ENCODE measurements at regions of chr2 and their contacts with region 1.

Region 1: GRCh38 chr2:138827426-138828054 is 47.4 kb upstream of the NXPH2 start:
- DNase-seq: peak; percentile 14
- ATAC-seq: peak; percentile 57
- H3K4me3 Mint-ChIP-seq: no peak overlapping the region
- H3K27ac Mint-ChIP-seq: no peak overlapping the region
- H3K4me1 Mint-ChIP-seq: no peaks in the 10 kb centered on the region
- H3K27me3 Mint-ChIP-seq: peaks cover 4% of the 10 kb centered on the region

Region 2: DNA sequence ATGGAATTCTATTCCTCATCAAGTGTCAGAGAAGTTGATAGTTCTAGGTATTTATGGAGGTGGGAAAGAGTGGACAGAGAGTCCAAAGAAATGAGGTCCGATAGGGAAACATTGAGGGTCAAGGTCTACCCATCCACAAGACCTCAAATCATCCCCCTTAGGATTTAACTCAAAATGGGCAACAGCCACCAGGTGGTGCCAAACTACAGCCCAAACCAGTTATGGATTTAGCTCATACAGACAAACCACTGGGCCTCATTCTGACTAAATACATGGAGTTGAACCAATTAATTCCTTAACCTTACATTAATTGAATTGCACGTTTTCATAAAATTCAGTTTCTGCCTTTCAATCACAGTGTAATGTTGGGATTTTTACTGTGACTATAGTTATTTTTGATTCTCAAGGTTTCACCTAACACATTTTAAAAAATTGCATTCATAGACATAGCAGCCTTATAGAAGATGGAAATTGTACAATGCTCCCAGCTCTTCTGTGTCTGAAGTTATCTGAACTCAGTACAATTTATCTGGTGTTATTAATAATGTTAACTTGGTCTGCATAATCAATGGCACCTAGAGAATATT is 961.5 kb before region 1 on chr2:
- CTCF ChIA-PET with region 1: interaction called, 16 read pairs
- POLR2A ChIA-PET with region 1: interaction called, 5 read pairs
- intact Hi-C with region 1: loop called (anchors 1 kb)
- DNase-seq: peak; percentile 72
- ATAC-seq: peak; percentile 42
- H3K4me3 Mint-ChIP-seq: no peak overlapping the region
- H3K27ac Mint-ChIP-seq: no peak overlapping the region
- H3K4me1 Mint-ChIP-seq: no peaks in the 10 kb centered on the region
- H3K27me3 Mint-ChIP-seq: peaks cover 4% of the 10 kb centered on the region

Region 3: DNA sequence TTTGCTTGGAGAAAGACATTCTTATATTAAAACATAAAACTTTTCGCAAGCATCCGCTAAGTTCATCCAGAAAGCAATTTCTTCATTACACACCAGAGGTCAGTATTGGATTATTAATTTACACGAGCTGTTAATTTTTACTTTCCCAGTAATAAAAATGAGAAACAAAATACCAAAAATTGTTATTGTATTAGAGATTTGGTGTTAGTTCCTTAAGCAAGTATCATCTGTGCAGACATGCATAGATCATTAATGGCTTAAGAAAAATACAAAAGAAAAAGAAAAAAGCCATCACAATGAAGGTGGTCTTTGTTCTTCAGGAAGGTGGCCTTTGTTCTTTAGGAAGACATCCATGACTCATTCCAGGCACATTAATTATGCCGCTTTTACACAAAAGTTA is 916.9 kb before region 1 on chr2:
- CTCF ChIA-PET with region 1: interaction called, 13 read pairs
- POLR2A ChIA-PET with region 1: no interaction called
- intact Hi-C with region 1: loop called (anchors 1 to 2 kb)
- DNase-seq: no peak
- ATAC-seq: no peak
- H3K4me3 Mint-ChIP-seq: no peak overlapping the region
- H3K27ac Mint-ChIP-seq: no peak overlapping the region
- H3K4me1 Mint-ChIP-seq: no peaks in the 10 kb centered on the region
- H3K27me3 Mint-ChIP-seq: peaks cover 2% of the 10 kb centered on the region

Region 4: GRCh38 chr2:137947728-137948336 is 879.7 kb before region 1 on chr2:
- CTCF ChIA-PET with region 1: interaction called, 4 read pairs
- POLR2A ChIA-PET with region 1: no interaction called
- intact Hi-C with region 1: loop called in 1 of 2 experiments (anchors 1 kb)
- DNase-seq: peak; percentile 61
- ATAC-seq: no peak
- H3K4me3 Mint-ChIP-seq: no peak overlapping the region
- H3K27ac Mint-ChIP-seq: no peak overlapping the region
- H3K4me1 Mint-ChIP-seq: peaks cover 3% of the 10 kb centered on the region
- H3K27me3 Mint-ChIP-seq: peaks cover 2% of the 10 kb centered on the region

Region 5: DNA sequence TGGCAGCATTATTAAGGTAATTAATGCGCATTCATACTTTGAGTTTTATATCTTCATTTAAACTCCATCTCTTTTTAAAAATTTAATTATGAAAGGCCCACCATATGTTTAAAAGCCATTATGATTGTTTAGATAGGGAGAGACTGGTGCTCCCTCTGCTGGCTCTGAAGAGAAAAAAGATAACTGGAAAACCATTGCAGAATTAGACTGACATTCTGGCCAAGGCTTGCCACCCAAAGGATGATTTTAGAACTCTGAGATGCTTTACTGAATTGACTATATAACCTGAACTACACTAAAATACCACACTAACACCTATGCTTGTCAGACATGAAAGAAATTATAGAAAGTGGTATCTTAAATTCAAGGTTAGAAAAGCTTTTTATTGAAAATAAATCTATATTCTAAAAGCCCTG is 453.5 kb before region 1 on chr2:
- CTCF ChIA-PET with region 1: interaction called, 3 read pairs
- POLR2A ChIA-PET with region 1: no interaction called
- intact Hi-C with region 1: loop called in 1 of 2 experiments (anchors 10 kb)
- DNase-seq: peak; percentile 12
- ATAC-seq: no peak
- H3K4me3 Mint-ChIP-seq: no peak overlapping the region
- H3K27ac Mint-ChIP-seq: no peak overlapping the region
- H3K4me1 Mint-ChIP-seq: no peaks in the 10 kb centered on the region
- H3K27me3 Mint-ChIP-seq: no peaks in the 10 kb centered on the region

Region 6: DNA sequence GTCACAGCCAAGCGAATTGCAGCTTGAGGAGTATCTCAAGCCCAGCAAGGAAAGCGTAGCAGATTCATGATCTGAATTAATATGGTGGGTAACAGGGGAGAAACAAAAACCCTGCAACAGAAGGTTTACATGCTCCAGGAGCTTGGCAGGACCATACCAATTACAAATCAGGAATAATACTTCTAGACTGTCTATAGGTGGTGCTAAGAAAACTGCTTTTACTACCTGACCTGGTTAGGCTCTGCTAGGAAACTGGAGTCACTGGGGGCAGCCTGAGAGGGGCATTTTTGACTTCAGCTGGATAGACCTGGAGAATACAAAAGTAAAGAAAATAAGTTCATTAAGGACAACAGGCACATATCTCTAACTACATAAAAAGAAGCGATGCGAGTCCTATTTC is 350.6 kb before region 1 on chr2:
- CTCF ChIA-PET with region 1: no interaction called
- POLR2A ChIA-PET with region 1: no interaction called
- intact Hi-C with region 1: loop called in 1 of 2 experiments (anchors 1 kb)
- DNase-seq: no peak
- ATAC-seq: no peak
- H3K4me3 Mint-ChIP-seq: no peak overlapping the region
- H3K27ac Mint-ChIP-seq: no peak overlapping the region
- H3K4me1 Mint-ChIP-seq: no peaks in the 10 kb centered on the region
- H3K27me3 Mint-ChIP-seq: peaks cover 2% of the 10 kb centered on the region

Region 7: DNA sequence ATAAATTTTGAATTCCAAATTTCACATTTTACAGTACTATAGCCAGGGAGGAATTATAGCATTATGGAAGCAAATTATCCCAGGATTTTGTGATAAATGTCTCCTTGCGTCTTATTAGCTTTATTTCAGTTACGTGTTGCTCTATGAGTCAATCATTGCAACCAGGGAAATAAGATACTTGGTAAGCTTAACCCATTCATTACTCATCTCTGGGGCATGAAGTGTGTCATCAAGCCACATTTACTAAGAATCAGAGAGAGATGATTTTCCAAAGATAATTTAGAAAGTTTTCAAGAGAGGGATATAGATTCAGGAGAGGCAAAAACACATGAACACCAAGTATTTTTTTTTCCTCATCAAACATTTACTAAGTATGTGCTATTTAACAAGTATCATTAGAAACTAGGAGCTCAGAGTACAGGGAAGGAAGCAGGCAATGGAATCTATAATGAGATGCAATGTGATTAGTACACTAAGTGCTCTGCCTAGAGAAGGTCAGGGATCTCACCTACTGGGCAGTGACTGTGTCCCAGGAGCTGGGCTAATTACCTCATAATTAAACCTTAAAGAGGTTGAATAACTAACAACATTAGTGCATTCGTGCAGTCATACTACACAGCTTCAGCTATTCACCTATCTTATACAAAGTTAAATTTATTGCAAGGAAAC is 170.4 kb after region 1 on chr2:
- CTCF ChIA-PET with region 1: no interaction called
- POLR2A ChIA-PET with region 1: no interaction called
- intact Hi-C with region 1: no loop called
- DNase-seq: no peak
- ATAC-seq: no peak
- H3K4me3 Mint-ChIP-seq: no peak overlapping the region
- H3K27ac Mint-ChIP-seq: no peak overlapping the region
- H3K4me1 Mint-ChIP-seq: no peaks in the 10 kb centered on the region
- H3K27me3 Mint-ChIP-seq: no peaks in the 10 kb centered on the region

Region 8: DNA sequence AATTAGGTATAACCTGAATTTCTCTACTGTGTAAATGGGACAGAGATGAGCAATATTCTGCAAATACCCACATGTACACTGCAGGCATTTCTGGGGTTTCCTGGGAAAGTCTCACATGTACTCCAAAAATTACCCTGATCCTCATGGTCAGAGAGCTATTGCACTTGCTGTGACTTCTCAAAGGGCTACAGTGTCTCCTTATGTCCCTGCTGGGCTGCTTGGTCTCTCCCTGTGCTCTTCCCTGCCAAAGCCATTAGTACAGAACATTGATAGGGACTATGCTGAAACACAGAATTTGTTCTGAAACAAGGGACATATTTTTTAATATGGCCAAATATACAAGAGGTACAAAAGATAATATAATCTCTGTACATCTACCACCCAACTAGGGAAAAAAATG is 877.1 kb after region 1 on chr2:
- CTCF ChIA-PET with region 1: no interaction called
- POLR2A ChIA-PET with region 1: no interaction called
- intact Hi-C with region 1: no loop called
- DNase-seq: no peak
- ATAC-seq: no peak
- H3K4me3 Mint-ChIP-seq: no peak overlapping the region
- H3K27ac Mint-ChIP-seq: no peak overlapping the region
- H3K4me1 Mint-ChIP-seq: no peaks in the 10 kb centered on the region
- H3K27me3 Mint-ChIP-seq: no peaks in the 10 kb centered on the region

Measured in activated CD4-positive, alpha-beta T cell treated with anti-CD3 and anti-CD28 coated beads for 36 hours (primary cell).